SK-N-SH (cell line): ENCODE measurements at regions of chr11 and their contacts with region 1.

Region 1: DNA sequence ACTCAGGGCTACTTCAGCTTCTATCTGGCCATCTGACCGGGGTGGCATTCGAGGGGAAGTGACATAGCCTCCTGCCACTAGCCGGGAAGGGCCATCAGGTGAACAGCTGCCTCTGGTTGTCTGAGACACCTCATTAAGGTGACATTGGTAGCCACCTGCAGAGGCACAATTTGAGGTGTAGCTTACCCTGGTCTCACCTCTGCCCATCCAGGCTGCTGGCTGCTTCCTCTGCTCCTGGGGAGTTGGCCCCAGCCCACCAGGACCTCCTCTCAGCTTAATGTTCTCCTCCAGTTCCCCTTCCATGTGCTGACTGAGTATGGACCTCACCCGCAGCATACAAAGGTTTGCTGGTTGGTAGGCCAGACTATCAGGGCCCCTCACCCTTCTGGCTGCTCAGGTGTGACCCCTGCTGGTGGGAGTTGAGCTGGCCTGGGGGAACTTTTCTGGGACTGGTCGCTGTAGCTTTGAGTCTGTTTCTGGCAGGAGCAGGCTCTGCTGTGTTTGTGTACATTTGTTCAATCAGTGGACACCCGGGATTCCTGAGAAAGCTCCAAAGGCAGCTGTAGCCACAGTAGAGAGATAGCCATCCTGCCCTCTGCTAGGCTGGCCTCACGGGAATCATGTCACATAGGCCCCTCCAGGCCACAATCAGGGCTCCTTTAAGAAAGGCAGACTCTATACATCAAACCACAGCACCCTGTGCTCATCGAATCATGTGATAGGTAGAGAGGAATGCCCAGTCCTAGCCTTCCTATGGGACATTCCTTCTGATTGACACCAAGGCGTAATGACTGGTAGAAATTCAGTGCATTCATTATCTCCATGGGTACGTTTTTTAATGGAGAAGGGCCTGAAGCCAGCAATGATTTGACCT is 295.1 kb upstream of the PLET1 start:
- DNase-seq: peak; percentile 66
- H3K4me3 ChIP-seq: no peak overlapping the region
- H3K27ac ChIP-seq: no peak overlapping the region
- H3K4me1 ChIP-seq: no peaks in the 10 kb centered on the region; a peak in 2 of 4 replicates
- H3K27me3 ChIP-seq: no peaks in the 10 kb centered on the region
- CTCF ChIP-seq: peak; percentile 63
- EP300 ChIP-seq: no peak
- RAD21 ChIP-seq: peak; percentile 69

Region 2: GRCh38 chr11:112289588-112290492 is 265.9 kb before region 1 on chr11:
- CTCF ChIA-PET with region 1: interaction called, 15 read pairs
- POLR2A ChIA-PET with region 1: no interaction called
- DNase-seq: peak; percentile 97
- H3K4me3 ChIP-seq: peak overlapping the region; percentile 72 to 73
- H3K27ac ChIP-seq: peak overlapping the region in 1 of 2 experiments; percentile 4; a peak in 1 of 4 replicates
- H3K4me1 ChIP-seq: peaks cover 9 to 30% of the 10 kb centered on the region in 2 experiments
- H3K27me3 ChIP-seq: no peaks in the 10 kb centered on the region
- CTCF ChIP-seq: peak; percentile 81
- EP300 ChIP-seq: no peak; a peak in 1 of 4 replicates
- RAD21 ChIP-seq: peak; percentile 83

Region 3: GRCh38 chr11:112541140-112541901 is 14.4 kb before region 1 on chr11:
- CTCF ChIA-PET with region 1: interaction called, 11 read pairs
- POLR2A ChIA-PET with region 1: no interaction called
- DNase-seq: no peak
- H3K4me3 ChIP-seq: no peak overlapping the region
- H3K27ac ChIP-seq: no peak overlapping the region
- H3K4me1 ChIP-seq: no peaks in the 10 kb centered on the region
- H3K27me3 ChIP-seq: no peaks in the 10 kb centered on the region; the same call in 1 of the 2 replicates
- CTCF ChIP-seq: no peak
- EP300 ChIP-seq: no peak
- RAD21 ChIP-seq: no peak